HEK293 (cell line): ENCODE measurements at regions of chr17 and their contacts with region 1.

Region 1: DNA sequence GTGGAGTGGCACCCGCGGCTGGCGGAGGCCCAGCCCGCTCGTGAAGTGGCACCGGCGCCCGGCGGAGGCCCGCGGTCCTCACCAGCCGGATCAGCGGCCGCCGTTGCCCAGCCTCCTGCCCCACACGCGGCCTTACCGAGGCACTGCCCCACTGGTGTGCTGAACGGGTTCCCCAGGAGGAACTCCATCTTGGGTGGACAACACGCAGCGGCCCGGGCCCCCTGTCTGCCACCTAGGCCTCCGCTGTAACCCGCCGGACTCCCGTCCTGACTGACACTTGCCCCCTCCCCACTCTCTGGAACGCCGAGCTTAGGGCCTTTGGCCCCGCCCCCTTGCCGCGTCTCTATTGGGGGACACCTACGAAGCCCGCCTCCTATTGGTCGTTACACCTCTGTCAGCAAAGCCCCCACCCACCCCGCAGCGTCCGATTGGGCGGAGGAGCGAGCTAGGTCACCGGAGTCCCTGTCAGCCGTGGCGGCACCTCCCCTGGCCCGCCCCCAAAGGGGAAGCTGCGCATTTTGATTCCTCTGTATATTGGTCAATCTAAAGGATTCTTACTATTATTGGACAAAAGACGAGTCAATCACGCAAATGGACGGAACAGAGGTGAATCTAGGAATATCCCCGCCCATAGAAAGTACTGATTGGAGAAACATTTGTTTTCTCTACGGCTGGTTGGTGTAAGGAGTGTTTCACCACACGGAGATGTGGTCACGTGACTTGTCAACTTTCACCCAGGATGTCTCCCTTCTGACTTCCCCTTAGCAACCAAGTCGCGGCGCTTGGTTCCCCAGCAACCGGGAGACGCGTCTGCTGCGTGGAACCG is at the starts of genes DRC3 and TOM1L2:
- H3K4me3 ChIP-seq: peak within 1 kb of the TSS; percentile 82
- H3K27ac ChIP-seq: no peak within 1 kb of the TSS
- H3K4me1 ChIP-seq: peaks cover 17% of the 10 kb centered on the region
- CTCF ChIP-seq: no peak

Region 2: GRCh38 chr17:17913695-17914332 is 58.5 kb before region 1 on chr17:
- CTCF ChIA-PET with region 1: interaction called, 6 read pairs
- POLR2A ChIA-PET with region 1: interaction called, 14 read pairs
- H3K4me3 ChIP-seq: no peak overlapping the region
- H3K27ac ChIP-seq: peak overlapping the region; percentile 60
- H3K4me1 ChIP-seq: peaks cover 12% of the 10 kb centered on the region
- CTCF ChIP-seq: no peak

Region 3: GRCh38 chr17:17928398-17929287 is 43.7 kb before region 1 on chr17:
- CTCF ChIA-PET with region 1: interaction called, 4 read pairs
- POLR2A ChIA-PET with region 1: interaction called, 17 read pairs
- H3K4me3 ChIP-seq: no peak overlapping the region
- H3K27ac ChIP-seq: no peak overlapping the region
- H3K4me1 ChIP-seq: peaks cover 6% of the 10 kb centered on the region; the same call in 1 of the 2 replicates
- CTCF ChIP-seq: no peak

Region 4: GRCh38 chr17:17935321-17936271 is 36.7 kb before region 1 on chr17:
- CTCF ChIA-PET with region 1: interaction called, 4 read pairs
- POLR2A ChIA-PET with region 1: interaction called, 16 read pairs
- H3K4me3 ChIP-seq: no peak overlapping the region
- H3K27ac ChIP-seq: no peak overlapping the region
- H3K4me1 ChIP-seq: peaks cover 27% of the 10 kb centered on the region
- CTCF ChIP-seq: no peak

Region 5: GRCh38 chr17:17942846-17943245 is 29.5 kb before region 1 on chr17:
- CTCF ChIA-PET with region 1: interaction called, 4 read pairs
- POLR2A ChIA-PET with region 1: interaction called, 16 read pairs
- H3K4me3 ChIP-seq: no peak overlapping the region
- H3K27ac ChIP-seq: peak overlapping the region; percentile 53; the same call in 1 of the 2 replicates
- H3K4me1 ChIP-seq: peaks cover 44% of the 10 kb centered on the region
- CTCF ChIP-seq: no peak

Region 6: GRCh38 chr17:17959520-17960361 is 12.6 kb before region 1 on chr17:
- CTCF ChIA-PET with region 1: interaction called, 4 read pairs
- POLR2A ChIA-PET with region 1: interaction called, 26 read pairs
- H3K4me3 ChIP-seq: no peak overlapping the region
- H3K27ac ChIP-seq: peak overlapping the region; percentile 81
- H3K4me1 ChIP-seq: peaks cover 32% of the 10 kb centered on the region
- CTCF ChIP-seq: no peak

Region 7: DNA sequence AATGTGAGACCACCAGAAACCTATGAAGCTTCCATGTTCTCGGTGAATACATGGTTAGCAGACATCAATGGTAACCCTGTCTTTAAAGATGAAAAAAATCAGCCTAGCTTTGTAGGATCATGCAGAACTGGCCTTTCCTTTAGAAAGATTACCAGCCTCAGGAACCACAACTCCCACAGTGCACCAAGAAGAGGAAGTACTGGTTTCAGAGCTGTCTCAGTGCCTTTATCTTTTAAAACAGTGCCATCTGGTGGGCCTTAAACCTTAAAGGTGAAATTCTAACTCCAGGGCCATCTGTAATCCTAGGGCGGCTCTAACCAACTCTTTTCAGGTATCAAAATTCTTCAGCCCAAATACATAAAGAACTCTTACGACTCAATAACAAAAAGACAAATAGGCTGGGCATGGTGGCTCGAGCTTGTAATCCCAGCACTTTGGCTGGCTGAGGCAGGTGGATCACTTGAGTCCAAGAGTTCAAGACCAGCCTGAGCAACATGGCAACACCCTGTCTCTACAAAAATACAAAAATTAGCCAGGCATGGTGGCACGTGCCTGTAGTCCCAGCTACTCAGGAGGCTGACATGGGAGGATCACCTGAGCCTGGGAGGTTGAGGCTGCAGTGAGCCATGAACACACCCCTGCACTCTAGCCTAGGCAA is 61.2 kb after region 1 on chr17:
- CTCF ChIA-PET with region 1: interaction called, 23 read pairs
- POLR2A ChIA-PET with region 1: interaction called, 10 read pairs
- H3K4me3 ChIP-seq: no peak overlapping the region
- H3K27ac ChIP-seq: no peak overlapping the region
- H3K4me1 ChIP-seq: no peaks in the 10 kb centered on the region; the same call in 1 of the 2 replicates
- CTCF ChIP-seq: peak; percentile 65; the same call in 1 of the 2 replicates